Activated CD8-positive, alpha-beta T cell treated with anti-CD3 and anti-CD28 coated beads, Interleukin-2, amount 10 ng/mL, durations not matched to agents 7 days and 5 days (primary cell): ENCODE measurements at regions of chr1 and their contacts with region 1.

Region 1: GRCh38 chr1:93304716-93305138 is 41.0 kb upstream of the DR1 start:
- DNase-seq: peak; percentile 67
- ATAC-seq: peak; percentile 51
- H3K4me3 Mint-ChIP-seq: no peak overlapping the region
- H3K27ac Mint-ChIP-seq: no peak overlapping the region
- H3K4me1 Mint-ChIP-seq: no peaks in the 10 kb centered on the region
- H3K27me3 Mint-ChIP-seq: no peaks in the 10 kb centered on the region

Region 2: GRCh38 chr1:92817137-92817697 is 487.5 kb before region 1 on chr1:
- CTCF ChIA-PET with region 1: no interaction called
- POLR2A ChIA-PET with region 1: no interaction called
- DNase-seq: no peak
- ATAC-seq: no peak
- H3K4me3 Mint-ChIP-seq: no peak overlapping the region
- H3K27ac Mint-ChIP-seq: no peak overlapping the region
- H3K4me1 Mint-ChIP-seq: no peaks in the 10 kb centered on the region
- H3K27me3 Mint-ChIP-seq: peaks cover 32% of the 10 kb centered on the region

Region 3: DNA sequence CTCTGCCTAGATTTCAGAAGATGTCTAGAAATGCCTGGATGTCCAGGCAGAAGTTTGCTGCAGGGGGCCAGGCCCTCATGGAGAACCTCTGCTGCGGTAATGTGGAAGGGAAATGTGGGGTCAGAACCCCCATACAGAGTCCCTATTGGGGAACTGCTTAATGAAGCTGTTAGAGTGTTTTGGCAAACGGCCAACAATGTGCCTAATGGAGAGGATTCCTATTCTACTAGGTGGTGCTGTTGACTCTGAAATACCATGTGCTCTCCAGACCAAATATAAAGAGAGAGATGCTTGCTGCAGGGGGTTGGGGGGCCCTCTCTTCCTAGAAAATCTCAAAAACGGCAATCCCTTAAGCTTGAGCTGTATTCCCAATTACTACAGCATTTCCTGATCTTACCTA is 16.2 kb before region 1 on chr1:
- CTCF ChIA-PET with region 1: interaction called, 15 read pairs
- POLR2A ChIA-PET with region 1: no interaction called
- DNase-seq: no peak
- ATAC-seq: no peak
- H3K4me3 Mint-ChIP-seq: no peak overlapping the region
- H3K27ac Mint-ChIP-seq: no peak overlapping the region
- H3K4me1 Mint-ChIP-seq: no peaks in the 10 kb centered on the region
- H3K27me3 Mint-ChIP-seq: no peaks in the 10 kb centered on the region

Region 4: DNA sequence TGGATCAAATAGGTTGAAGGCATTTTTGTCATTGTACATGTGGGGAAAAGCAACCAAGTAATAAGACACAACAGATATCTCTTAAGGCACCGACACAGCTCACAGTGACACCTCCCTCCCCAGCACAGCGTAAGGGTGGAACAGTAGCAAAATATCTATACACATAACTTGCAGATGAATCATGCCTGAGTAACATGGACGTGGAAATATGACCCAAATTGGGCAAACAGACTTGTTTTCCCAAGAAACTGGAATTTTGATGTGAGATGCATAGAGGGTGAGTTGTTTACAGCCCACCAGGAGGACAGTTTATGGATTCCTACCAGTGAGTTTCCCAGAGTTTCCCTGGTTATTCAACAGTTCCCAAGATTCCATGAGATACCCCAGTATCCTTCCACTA is 33.7 kb after region 1 on chr1:
- CTCF ChIA-PET with region 1: interaction called, 23 read pairs
- POLR2A ChIA-PET with region 1: interaction called, 3 read pairs
- DNase-seq: no peak
- ATAC-seq: no peak
- H3K4me3 Mint-ChIP-seq: no peak overlapping the region
- H3K27ac Mint-ChIP-seq: no peak overlapping the region
- H3K4me1 Mint-ChIP-seq: no peaks in the 10 kb centered on the region
- H3K27me3 Mint-ChIP-seq: no peaks in the 10 kb centered on the region

Region 5: GRCh38 chr1:93629099-93630059 is 324.7 kb after region 1 on chr1:
- CTCF ChIA-PET with region 1: interaction called, 10 read pairs
- POLR2A ChIA-PET with region 1: no interaction called
- DNase-seq: peak; percentile 61
- ATAC-seq: peak; percentile 60
- H3K4me3 Mint-ChIP-seq: no peak overlapping the region
- H3K27ac Mint-ChIP-seq: no peak overlapping the region
- H3K4me1 Mint-ChIP-seq: no peaks in the 10 kb centered on the region
- H3K27me3 Mint-ChIP-seq: peaks cover 6% of the 10 kb centered on the region

Region 6: DNA sequence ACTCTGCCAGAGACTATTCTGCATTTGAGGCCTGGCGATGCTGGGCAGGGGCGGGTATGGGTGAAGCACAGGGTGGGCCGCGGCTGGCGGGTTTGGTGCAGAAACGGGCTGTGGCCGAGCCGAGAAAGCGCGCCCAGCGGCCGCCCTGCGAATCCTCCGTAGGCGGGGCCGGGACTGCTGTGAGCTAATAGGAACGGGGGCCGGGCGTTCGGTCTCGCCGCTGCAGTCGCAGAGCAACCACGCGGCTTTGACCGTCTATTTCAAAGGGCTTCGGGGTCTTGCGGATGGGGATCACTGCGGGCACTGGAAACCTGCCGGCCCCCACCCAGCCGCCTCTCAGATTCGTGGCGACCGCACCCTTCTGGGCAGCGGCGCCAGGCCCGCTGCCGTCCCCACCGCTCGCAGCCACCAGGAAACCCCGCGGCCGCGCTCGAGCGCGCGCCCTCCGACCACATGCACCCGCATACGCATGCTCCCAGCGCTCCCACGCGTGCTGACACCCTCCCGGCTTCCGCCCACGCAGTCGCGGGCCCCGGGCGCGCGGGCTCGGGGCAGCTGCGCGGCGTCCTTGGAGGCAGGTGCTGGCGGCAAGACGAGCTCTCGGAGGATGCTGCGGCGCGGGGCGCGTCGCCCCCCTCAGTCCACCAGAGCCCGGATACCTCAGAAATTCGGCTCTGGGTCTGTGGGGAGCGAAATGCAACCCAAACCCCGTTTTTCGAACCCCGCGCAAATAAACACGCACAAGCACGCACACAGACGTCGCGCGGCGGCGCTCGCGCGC is 541.7 kb after region 1 on chr1:
- CTCF ChIA-PET with region 1: interaction called, 30 read pairs
- POLR2A ChIA-PET with region 1: no interaction called
- DNase-seq: peak; percentile 88
- ATAC-seq: peak; percentile 58
- H3K4me3 Mint-ChIP-seq: peak overlapping the region; percentile 93
- H3K27ac Mint-ChIP-seq: peak overlapping the region; percentile 92
- H3K4me1 Mint-ChIP-seq: peaks cover 36% of the 10 kb centered on the region
- H3K27me3 Mint-ChIP-seq: peaks cover 9% of the 10 kb centered on the region